ENCODE measurements at regions of chr1 and their contacts with region 1.

Region 1: GRCh38 chr1:56578963-56579875 is at the start of gene PLPP3:
- DNase-seq: peak; percentile 86
- ATAC-seq: peak; percentile 78
- H3K4me3 ChIP-seq: peak within 1 kb of the TSS; percentile 94
- H3K27ac ChIP-seq: peak within 1 kb of the TSS; percentile 68
- H3K4me1 ChIP-seq: peaks cover 33% of the 10 kb centered on the region
- H3K27me3 ChIP-seq: no peaks in the 10 kb centered on the region
- CTCF ChIP-seq: peak; percentile 56
- total RNA-seq, gene PLPP3: 32.8 and 41.0 TPM in 2 replicates

Region 2: GRCh38 chr1:55478742-55479141 is 1100.5 kb before region 1 on chr1:
- CTCF ChIA-PET with region 1: no interaction called
- POLR2A ChIA-PET with region 1: interaction called, 3 read pairs
- intact Hi-C with region 1: loop called (anchors 10 kb)
- DNase-seq: peak; percentile 79
- ATAC-seq: peak; percentile 58
- H3K4me3 ChIP-seq: no peak overlapping the region
- H3K27ac ChIP-seq: no peak overlapping the region
- H3K4me1 ChIP-seq: peaks cover 13% of the 10 kb centered on the region
- H3K27me3 ChIP-seq: no peaks in the 10 kb centered on the region
- CTCF ChIP-seq: peak; percentile 70

Region 3: GRCh38 chr1:55685560-55685959 is 893.7 kb before region 1 on chr1:
- CTCF ChIA-PET with region 1: no interaction called
- POLR2A ChIA-PET with region 1: no interaction called
- intact Hi-C with region 1: loop called (anchors 2 kb)
- DNase-seq: no peak
- ATAC-seq: no peak
- H3K4me3 ChIP-seq: no peak overlapping the region
- H3K27ac ChIP-seq: 0 out of 2 replicates have a peak overlapping the region, but pooled peaks have one; percentile 88
- H3K4me1 ChIP-seq: peaks cover 23% of the 10 kb centered on the region
- H3K27me3 ChIP-seq: no peaks in the 10 kb centered on the region
- CTCF ChIP-seq: no peak

Region 4: GRCh38 chr1:55893155-55893554 is 686.1 kb before region 1 on chr1:
- CTCF ChIA-PET with region 1: no interaction called
- POLR2A ChIA-PET with region 1: no interaction called
- intact Hi-C with region 1: loop called (anchors 10 kb)
- DNase-seq: peak; percentile 81
- ATAC-seq: 0 out of 2 replicates have a peak, but pooled peaks have one; percentile 35
- H3K4me3 ChIP-seq: no peak overlapping the region
- H3K27ac ChIP-seq: no peak overlapping the region
- H3K4me1 ChIP-seq: peaks cover 7% of the 10 kb centered on the region; the same call in 1 of the 2 replicates
- H3K27me3 ChIP-seq: no peaks in the 10 kb centered on the region
- CTCF ChIP-seq: peak; percentile 64

Region 5: DNA sequence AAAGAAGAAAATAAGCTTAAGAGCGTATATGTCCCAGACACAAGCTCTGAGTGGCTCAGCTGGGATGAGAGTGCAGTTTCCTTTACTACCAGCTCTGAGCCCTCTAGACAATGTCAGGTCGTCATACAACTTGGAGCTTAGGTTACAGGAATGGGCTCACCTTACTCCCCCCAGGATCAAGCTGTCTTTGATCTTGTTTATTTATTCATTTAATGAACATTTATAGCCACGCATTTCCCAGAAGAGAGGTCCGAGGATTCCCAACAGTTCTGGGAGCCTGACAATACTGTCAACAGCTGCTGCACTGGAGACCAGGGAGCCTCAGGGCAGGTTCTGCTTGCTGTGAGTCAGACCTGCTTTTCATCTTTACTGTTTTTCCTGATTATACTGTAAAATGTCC is 378.8 kb before region 1 on chr1:
- CTCF ChIA-PET with region 1: no interaction called
- POLR2A ChIA-PET with region 1: no interaction called
- intact Hi-C with region 1: loop called (anchors 10 kb)
- DNase-seq: peak; percentile 68
- ATAC-seq: peak; percentile 96
- H3K4me3 ChIP-seq: peak overlapping the region; percentile 40; the same call in 1 of the 2 replicates
- H3K27ac ChIP-seq: no peak overlapping the region; the same call in 1 of the 2 replicates
- H3K4me1 ChIP-seq: peaks cover 14% of the 10 kb centered on the region; the same call in 1 of the 2 replicates
- H3K27me3 ChIP-seq: no peaks in the 10 kb centered on the region
- CTCF ChIP-seq: no peak

Region 6: GRCh38 chr1:56376188-56376984 is 202.8 kb before region 1 on chr1:
- CTCF ChIA-PET with region 1: interaction called, 3 read pairs
- POLR2A ChIA-PET with region 1: no interaction called
- intact Hi-C with region 1: loop called (anchors 5 kb)
- DNase-seq: peak; percentile 97
- ATAC-seq: peak; percentile 77
- H3K4me3 ChIP-seq: peak overlapping the region; percentile 44; the same call in 1 of the 2 replicates
- H3K27ac ChIP-seq: peak overlapping the region; percentile 76
- H3K4me1 ChIP-seq: peaks cover 66% of the 10 kb centered on the region
- H3K27me3 ChIP-seq: no peaks in the 10 kb centered on the region
- CTCF ChIP-seq: no peak

Region 7: DNA sequence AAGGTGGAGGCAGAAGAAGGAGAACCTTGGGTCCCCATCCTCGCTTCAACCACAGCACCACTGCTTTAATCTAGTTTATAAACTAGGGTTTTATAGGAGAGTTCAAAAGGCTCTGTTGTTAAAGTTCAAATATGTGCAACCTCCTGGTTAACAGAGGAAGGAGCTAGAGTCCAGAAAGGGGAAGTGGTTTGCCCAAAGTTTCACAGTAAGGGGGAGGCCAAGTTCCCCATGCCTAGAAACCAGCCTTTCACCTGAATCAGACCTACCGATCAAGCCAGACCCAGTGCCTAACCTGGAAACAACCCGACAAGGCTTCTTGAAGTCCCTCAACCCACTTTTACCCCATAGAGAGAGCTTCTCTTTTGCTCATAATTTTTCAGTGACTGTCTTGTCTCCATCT is 106.4 kb before region 1 on chr1:
- CTCF ChIA-PET with region 1: interaction called, 7 read pairs
- POLR2A ChIA-PET with region 1: interaction called, 6 read pairs
- intact Hi-C with region 1: loop called (anchors 5 kb)
- DNase-seq: no peak
- ATAC-seq: no peak
- H3K4me3 ChIP-seq: no peak overlapping the region
- H3K27ac ChIP-seq: no peak overlapping the region
- H3K4me1 ChIP-seq: peaks cover 35% of the 10 kb centered on the region
- H3K27me3 ChIP-seq: no peaks in the 10 kb centered on the region
- CTCF ChIP-seq: no peak

Region 8: GRCh38 chr1:56688506-56689026 is 109.3 kb after region 1 on chr1:
- CTCF ChIA-PET with region 1: no interaction called
- POLR2A ChIA-PET with region 1: no interaction called
- intact Hi-C with region 1: no loop called
- DNase-seq: peak; percentile 97
- ATAC-seq: peak; percentile 98
- H3K4me3 ChIP-seq: peak overlapping the region; percentile 3; the same call in 1 of the 2 replicates
- H3K27ac ChIP-seq: peak overlapping the region; percentile 78
- H3K4me1 ChIP-seq: peaks cover 33% of the 10 kb centered on the region
- H3K27me3 ChIP-seq: no peaks in the 10 kb centered on the region
- CTCF ChIP-seq: no peak